Activated B cell treated with CpG ODN at 0.5 μM for 24 hours (primary cell): ENCODE measurements at regions of chr12 and their contacts with region 1.

Region 1: DNA sequence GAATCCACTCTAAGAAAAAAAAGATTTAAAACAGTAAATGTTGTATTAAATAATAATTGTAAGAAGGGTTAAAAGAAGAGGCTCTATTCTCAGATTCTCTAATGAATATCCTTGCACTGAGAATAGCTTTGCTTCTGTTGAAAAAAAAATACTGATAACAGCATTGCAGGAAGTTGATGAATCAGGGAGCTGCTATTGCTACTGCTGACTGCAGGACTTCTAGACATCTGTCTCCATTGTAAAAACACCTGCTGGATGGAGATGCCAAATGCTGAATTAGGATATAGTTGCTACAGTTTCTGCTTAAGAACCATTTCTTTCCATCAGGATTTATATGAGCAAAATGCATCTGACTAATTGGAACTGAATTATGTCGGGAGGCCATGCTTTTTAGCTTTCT is 50.3 kb upstream of the ANP32D start:
- DNase-seq: no peak
- ATAC-seq: no peak
- H3K4me3 Mint-ChIP-seq: no peak overlapping the region
- H3K27ac Mint-ChIP-seq: no peak overlapping the region
- H3K4me1 Mint-ChIP-seq: no peaks in the 10 kb centered on the region
- H3K27me3 Mint-ChIP-seq: peaks cover 18% of the 10 kb centered on the region
- CTCF ChIP-seq: no peak

Region 2: DNA sequence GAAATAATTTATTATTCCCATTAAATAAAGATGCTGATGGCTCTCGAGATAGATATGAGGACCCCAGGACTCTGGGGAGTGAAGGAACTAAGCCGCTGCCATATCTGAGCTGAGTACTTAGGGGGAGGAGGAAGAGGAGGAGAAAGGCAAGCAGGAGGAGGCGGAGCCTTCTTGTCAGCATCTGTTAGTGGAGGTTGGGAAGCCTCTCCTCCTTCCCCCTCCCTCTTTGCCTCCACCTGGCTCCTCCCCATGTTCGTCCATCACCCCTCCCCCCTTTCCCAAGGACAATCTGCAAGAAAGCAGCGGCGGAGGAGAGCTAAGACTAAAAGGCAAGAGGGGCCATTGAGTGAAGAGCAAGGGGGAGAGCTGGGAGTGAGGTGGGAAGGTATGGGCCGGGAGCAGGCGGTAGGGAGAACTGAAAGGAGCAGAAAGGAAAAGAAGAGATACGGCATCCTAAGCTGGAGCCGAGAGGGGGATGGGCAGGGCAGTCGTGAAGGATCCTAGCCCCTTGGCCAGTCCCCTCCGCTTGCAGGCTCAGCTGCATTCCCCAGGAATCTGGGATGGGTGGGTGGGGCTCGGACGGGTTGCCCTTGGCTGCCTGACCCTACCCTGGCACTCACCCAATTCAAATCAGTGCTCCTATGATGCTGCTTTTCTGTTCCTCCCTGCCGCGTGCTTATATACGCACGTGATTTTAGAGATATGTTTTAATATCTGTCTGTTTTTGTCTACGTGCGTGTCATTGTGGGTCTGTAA is 302.8 kb before region 1 on chr12 and contains the start of gene PFKM:
- CTCF ChIA-PET with region 1: no interaction called
- POLR2A ChIA-PET with region 1: interaction called, 14 read pairs
- intact Hi-C with region 1: no loop called
- DNase-seq: peak; percentile 43
- ATAC-seq: peak; percentile 97
- H3K4me3 Mint-ChIP-seq: peak within 1 kb of the TSS; percentile 99
- H3K27ac Mint-ChIP-seq: peak within 1 kb of the TSS; percentile 87
- H3K4me1 Mint-ChIP-seq: peaks cover 21% of the 10 kb centered on the region
- H3K27me3 Mint-ChIP-seq: no peaks in the 10 kb centered on the region
- CTCF ChIP-seq: no peak
- total RNA-seq, gene PFKM: 44.7 and 49.2 TPM in 2 replicates